Vagina (tissue), 2 donors: ENCODE measurements at regions of chr13 and their contacts with region 1.

Region 1: DNA sequence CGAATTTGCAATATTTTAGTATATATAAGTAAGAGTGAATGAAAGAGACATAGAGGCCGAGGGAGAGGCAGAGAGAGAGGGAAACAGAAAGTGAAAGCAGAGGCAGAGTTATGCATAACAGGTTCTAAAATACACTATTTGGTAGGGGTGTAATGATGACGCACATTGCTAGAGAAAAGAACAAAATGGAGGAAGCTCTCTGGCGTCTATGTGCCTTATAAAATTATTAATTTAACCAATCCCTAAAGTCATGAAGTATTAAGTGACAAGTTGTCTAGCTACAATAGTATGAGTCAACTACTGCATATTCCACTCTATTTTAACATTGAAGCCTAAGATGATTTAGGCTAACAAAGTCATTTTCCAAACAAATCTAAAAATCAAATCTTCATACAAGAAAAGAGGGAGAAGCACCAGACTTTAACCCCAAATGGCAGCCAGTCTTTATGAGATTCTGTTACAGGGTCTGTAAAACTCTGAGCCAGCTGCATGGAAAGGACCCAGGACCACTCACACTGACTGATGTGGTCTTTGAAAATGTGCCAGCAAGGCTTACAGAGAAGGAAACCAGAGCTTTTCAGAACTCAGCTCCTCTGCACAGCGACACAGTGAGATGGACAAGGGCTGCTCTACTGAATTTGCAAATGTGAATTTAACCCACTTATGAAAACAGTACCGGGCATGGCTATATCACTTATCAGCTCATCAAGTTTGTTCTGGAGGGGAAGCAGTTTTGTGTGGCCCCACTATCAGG is 99.0 kb upstream of the SERP2 start:
- DNase-seq: no peak
- H3K4me3 ChIP-seq: peak overlapping the region; percentile 14 to 16
- H3K27ac ChIP-seq: peak overlapping the region; percentile 87
- H3K4me1 ChIP-seq: peaks cover 28% of the 10 kb centered on the region
- H3K27me3 ChIP-seq: no peaks in the 10 kb centered on the region
- CTCF ChIP-seq: no peak
- POLR2A ChIP-seq: peak in 1 of 2 donors; percentile 3

Region 2: DNA sequence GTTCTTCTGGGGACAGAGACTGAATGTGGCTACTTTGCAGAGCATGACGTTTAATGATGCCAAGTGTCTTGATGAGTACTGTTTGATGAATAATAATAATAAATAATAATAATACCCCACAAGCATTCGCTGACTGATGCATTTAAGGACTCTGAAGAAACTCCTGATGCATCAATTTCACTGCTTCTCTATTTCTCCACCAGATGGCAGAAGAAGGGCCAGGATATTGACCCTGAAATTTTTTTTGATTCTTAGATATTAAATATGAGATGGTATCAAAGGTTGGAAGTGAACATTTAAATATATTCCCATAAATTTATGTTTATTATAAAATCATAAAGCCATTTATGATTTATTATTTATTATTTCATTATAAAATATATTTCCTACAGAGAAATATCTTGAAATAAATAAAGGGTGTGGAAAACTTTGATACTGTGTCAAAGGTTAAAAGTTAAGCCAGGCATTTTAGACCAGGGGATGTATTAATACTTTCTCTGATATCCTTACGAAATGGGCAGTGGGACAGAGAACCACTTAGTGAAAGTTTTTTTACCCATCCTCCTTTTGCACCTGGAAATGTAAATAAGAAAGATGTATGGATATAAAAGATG is 224.1 kb before region 1 on chr13:
- intact Hi-C with region 1: loop called (anchors 10 kb)
- DNase-seq: no peak
- H3K4me3 ChIP-seq: no peak overlapping the region
- H3K27ac ChIP-seq: no peak overlapping the region
- H3K4me1 ChIP-seq: peaks cover 6% of the 10 kb centered on the region
- H3K27me3 ChIP-seq: no peaks in the 10 kb centered on the region
- CTCF ChIP-seq: peak; percentile 37 to 75 (median 41)
- POLR2A ChIP-seq: no peak

Region 3: GRCh38 chr13:44218501-44219240 is 56.0 kb before region 1 on chr13:
- intact Hi-C with region 1: loop called (anchors 5 kb)
- DNase-seq: peak in 1 of 2 donors; percentile 89
- H3K4me3 ChIP-seq: no peak overlapping the region
- H3K27ac ChIP-seq: peak overlapping the region; percentile 57
- H3K4me1 ChIP-seq: peaks cover 39% of the 10 kb centered on the region
- H3K27me3 ChIP-seq: no peaks in the 10 kb centered on the region
- CTCF ChIP-seq: no peak
- POLR2A ChIP-seq: no peak

Region 4: DNA sequence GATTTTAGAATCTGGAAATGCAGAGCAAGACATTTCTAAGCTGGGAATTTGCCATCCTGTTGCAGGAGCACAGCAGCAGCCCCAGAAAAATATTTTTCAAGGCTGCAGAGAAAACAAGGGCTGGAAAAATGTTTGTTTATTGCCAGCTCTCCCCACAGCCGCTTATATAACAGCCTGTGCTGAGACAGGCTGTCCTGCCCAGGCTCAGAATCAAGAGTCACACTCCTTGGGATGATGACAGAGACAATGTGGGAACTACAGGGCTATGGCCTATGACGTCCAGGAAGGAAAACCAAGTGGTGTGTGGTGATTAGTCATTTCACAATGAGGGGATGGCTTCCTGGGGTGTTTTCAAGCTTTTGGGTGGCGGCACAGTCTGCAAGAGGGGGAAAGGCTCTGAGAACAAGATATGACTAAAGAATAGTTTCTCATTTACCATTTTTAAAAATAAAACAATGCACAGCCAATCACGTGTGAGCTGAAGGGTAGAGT is 37.3 kb before region 1 on chr13:
- intact Hi-C with region 1: loop called (anchors 5 kb)
- DNase-seq: peak in 1 of 2 donors; percentile 97
- H3K4me3 ChIP-seq: no peak overlapping the region
- H3K27ac ChIP-seq: peak overlapping the region; percentile 90
- H3K4me1 ChIP-seq: peaks cover 50% of the 10 kb centered on the region
- H3K27me3 ChIP-seq: no peaks in the 10 kb centered on the region
- CTCF ChIP-seq: no peak
- POLR2A ChIP-seq: no peak